ENCODE measurements at regions of chr1 and their contacts with region 1.

Region 1: DNA sequence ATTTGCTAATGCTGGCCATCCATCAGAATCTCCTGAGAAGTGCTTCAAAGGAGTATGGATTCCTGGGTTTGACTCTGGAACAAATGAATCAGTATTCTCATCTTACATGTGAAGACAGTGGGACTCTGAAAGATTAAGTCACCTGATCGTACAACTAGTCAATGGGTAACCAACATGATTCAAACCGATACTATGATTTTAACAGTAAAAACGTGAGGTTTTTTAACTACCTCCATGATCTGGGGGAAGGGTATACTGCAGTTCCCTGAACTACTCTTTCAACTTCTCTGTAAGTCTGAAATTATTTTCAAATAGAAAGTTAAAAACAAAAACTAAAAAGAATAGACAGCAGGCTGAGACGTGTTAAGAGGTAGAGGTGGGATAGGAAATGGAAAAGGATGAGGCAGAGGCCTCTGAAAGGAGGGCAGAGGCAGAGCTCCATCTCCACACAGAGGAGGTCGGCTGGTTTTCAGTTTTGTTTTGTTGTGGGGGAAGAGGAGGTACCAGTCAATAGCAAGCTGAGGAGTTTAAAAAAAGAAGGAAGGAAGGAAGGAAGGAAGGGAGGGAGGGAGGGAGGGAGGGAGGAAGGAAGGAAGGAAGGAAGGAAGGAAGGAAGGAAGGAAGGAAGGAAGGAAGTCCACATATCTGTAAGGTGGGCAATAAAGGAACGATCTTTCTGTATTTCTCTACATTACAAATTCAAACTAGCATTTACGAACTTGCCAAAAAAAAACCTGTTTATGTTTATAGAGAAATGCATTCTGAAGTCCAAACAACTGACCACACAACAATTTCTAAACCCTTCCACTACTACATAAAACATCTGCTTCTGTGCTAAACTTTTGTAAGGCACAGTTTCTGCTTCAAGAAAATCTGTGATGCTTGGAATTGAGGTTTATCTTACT is 213.1 kb downstream of the RERE start:
- DNase-seq: peak; percentile 63
- H3K4me3 Mint-ChIP-seq: peak overlapping the region; percentile 73
- H3K27ac Mint-ChIP-seq: peak overlapping the region; percentile 97
- H3K4me1 Mint-ChIP-seq: peaks cover 40% of the 10 kb centered on the region
- H3K27me3 Mint-ChIP-seq: no peaks in the 10 kb centered on the region

Region 2: DNA sequence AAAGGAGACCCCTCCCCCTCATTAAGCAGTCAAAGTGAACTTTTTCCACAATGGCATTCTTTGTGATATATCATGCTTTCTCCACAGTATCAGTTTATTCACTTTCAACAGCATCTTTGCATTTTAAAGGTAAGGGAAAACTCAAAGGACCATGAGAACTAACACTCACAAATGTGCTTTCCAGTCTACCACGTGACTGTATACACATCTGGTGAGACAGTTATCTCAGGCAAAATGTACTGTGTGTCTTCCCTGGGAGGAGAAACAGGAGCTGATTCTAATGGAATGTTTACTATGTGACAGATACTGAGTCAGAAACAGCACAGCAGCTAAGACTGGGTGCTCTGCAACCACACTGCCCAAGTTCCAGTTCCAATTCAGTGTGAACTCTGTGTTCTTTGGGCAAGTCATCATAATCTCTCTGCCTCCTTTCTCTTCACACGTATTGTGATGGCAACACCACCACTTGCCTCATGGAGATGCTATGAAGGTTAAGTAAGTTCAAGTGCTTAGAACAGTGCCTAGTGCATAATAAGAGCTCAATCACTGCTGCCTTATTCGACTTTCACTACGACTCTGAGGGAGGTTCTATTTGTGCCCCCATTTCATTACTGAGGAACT is 207.4 kb before region 1 on chr1:
- CTCF ChIA-PET with region 1: interaction called, 5 read pairs
- POLR2A ChIA-PET with region 1: no interaction called
- intact Hi-C with region 1: loop called (anchors 1 kb)
- DNase-seq: peak; percentile 69
- H3K4me3 Mint-ChIP-seq: peak overlapping the region; percentile 1
- H3K27ac Mint-ChIP-seq: peak overlapping the region; percentile 70
- H3K4me1 Mint-ChIP-seq: peaks cover 70% of the 10 kb centered on the region
- H3K27me3 Mint-ChIP-seq: no peaks in the 10 kb centered on the region

Region 3: DNA sequence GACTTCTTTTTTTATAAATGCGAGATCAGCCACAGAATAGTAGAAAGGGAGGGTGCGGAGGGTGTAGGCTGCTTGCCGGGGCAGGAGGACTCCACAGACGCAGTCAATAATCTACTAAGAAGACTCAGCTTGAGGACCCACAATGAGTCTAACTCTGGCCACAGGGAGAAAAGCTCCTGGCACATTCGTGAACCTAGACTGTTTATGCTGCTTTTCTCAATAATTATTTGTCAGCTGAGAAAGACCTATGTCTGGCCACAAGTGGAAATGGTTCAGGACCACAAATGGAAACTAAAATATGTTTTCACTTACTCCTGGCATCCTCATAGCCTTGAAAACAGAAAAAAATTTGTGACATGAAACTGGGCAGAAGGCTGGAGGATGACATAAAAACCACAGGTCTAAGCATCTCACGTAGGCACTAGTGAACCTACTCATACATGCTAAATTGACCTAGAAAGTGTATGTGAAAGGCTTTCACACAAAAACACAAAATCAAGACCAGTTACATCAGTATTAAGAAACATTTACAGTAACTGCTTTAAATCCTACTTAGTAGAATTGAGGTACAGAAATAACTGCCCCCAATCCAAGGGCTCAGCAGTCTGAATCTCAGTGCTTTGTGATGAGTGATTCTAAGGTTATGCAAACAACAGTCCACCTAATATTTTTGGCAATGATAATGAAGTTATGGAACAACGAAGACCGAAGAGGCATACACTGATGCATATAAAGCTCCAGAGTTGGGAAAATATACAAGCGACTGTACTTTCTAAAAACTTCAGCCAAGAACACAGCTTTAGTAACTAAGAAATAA is 126.9 kb before region 1 on chr1:
- CTCF ChIA-PET with region 1: interaction called, 4 read pairs
- POLR2A ChIA-PET with region 1: interaction called, 3 read pairs
- intact Hi-C with region 1: loop called (anchors 2 kb)
- DNase-seq: peak; percentile 52
- H3K4me3 Mint-ChIP-seq: peak overlapping the region; percentile 26
- H3K27ac Mint-ChIP-seq: peak overlapping the region; percentile 40
- H3K4me1 Mint-ChIP-seq: peaks cover 50% of the 10 kb centered on the region
- H3K27me3 Mint-ChIP-seq: no peaks in the 10 kb centered on the region

Region 4: DNA sequence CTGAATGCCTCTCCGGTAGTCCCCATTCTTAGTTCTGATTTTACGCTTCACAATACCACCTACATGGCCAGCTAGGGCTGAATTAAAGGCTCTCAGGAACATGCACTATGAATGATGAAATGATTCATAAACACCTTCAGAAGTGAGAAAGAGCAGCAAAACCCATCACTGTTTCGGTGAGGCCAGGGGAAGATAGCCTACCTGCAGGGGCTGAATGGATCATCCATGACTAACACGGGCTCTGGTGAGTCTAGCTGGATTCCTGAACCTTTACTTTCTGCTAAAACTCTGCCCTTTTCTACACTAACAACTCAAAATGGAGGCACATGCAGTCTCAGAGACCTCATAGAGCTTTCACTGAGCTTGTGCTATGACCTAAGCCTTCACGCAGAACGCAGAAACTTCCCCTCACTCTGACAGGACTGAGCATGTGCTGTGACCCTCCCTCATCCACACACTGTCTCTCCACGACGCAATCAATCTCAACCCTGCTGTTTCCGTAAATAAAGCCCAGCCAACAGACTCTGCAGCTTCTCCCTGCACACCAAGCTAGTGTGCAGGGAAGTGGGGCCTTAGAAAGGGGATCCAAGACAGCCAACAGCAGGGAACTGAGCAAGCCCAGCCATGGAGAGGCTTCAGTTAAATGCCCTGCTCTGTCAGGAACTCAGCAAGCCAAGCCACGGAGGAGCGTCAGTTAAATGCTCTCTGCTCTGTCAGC is 78.6 kb before region 1 on chr1:
- CTCF ChIA-PET with region 1: no interaction called
- POLR2A ChIA-PET with region 1: no interaction called
- intact Hi-C with region 1: loop called (anchors 10 kb)
- DNase-seq: peak; percentile 85
- H3K4me3 Mint-ChIP-seq: no peak overlapping the region
- H3K27ac Mint-ChIP-seq: no peak overlapping the region
- H3K4me1 Mint-ChIP-seq: peaks cover 18% of the 10 kb centered on the region
- H3K27me3 Mint-ChIP-seq: no peaks in the 10 kb centered on the region

Region 5: DNA sequence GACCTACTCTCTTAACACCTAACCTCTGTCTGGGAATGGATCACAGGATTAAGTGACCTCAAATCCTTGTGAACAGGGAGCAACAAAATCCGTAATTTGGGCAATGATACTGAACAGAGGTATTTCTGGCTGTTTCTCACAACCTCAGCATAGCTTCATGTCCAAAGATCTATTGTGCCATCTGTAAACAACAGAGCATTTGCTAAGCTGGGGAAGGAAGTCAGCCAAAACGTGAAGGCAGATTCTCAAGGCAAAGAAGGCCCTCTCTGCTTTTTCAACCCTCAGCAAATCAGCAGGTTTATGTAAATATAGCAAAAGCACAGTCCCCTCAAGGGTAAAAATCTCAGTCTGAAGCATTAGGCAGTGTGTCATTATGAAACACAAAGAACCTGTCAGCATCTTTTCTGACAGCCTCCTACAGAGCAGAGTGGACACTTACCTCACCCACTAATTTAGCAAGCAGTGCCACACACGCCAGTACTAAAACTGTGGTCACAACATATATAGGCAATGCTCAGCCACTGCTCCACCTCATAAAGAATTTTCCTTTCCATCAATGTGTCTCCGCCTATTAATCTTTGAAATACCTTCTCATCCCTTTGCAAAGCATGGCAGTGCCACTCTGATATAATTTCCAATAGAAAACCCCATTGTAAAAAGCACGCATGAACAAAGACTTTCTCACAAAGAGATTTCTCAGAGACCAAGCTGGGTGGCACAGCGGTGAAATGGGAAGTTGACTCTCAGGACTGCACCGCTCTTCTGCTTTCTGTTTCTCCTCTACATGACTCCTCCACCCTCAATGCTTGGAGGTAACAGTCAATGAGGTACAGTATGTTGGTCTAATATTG is 25.2 kb after region 1 on chr1:
- CTCF ChIA-PET with region 1: interaction called, 3 read pairs
- POLR2A ChIA-PET with region 1: no interaction called
- intact Hi-C with region 1: loop called (anchors 2 kb)
- DNase-seq: peak; percentile 23
- H3K4me3 Mint-ChIP-seq: no peak overlapping the region
- H3K27ac Mint-ChIP-seq: peak overlapping the region; percentile 10
- H3K4me1 Mint-ChIP-seq: peaks cover 47% of the 10 kb centered on the region
- H3K27me3 Mint-ChIP-seq: no peaks in the 10 kb centered on the region

Region 6: GRCh38 chr1:8660411-8660828 is 56.1 kb after region 1 on chr1:
- CTCF ChIA-PET with region 1: interaction called, 4 read pairs
- POLR2A ChIA-PET with region 1: no interaction called
- intact Hi-C with region 1: loop called (anchors 1 kb)
- DNase-seq: no peak
- H3K4me3 Mint-ChIP-seq: no peak overlapping the region
- H3K27ac Mint-ChIP-seq: no peak overlapping the region
- H3K4me1 Mint-ChIP-seq: peaks cover 3% of the 10 kb centered on the region
- H3K27me3 Mint-ChIP-seq: no peaks in the 10 kb centered on the region

Region 7: GRCh38 chr1:8702850-8703810 is 98.8 kb after region 1 on chr1:
- CTCF ChIA-PET with region 1: no interaction called
- POLR2A ChIA-PET with region 1: no interaction called
- intact Hi-C with region 1: loop called (anchors 1 kb)
- DNase-seq: peak; percentile 77
- H3K4me3 Mint-ChIP-seq: peak overlapping the region; percentile 78
- H3K27ac Mint-ChIP-seq: peak overlapping the region; percentile 34
- H3K4me1 Mint-ChIP-seq: peaks cover 27% of the 10 kb centered on the region
- H3K27me3 Mint-ChIP-seq: peaks cover 30% of the 10 kb centered on the region

Measured in activated CD4-positive, alpha-beta memory T cell treated with anti-CD3 and anti-CD28 coated beads for 36 hours (primary cell).